ENCODE measurements at regions of chr6 and their contacts with region 1.

Region 1: GRCh38 chr6:26596579-26597388 is at the start of gene ABT1:
- DNase-seq: peak; percentile 96 to 98
- ATAC-seq: peak; percentile 98 to 99
- H3K4me3 ChIP-seq: peak within 1 kb of the TSS; percentile 82 to 97 (median 90)
- H3K27ac ChIP-seq: peak within 1 kb of the TSS; percentile 86 to 93 (median 90)
- H3K4me1 ChIP-seq: peaks cover 11 to 19% of the 10 kb centered on the region in 2 donors
- H3K27me3 ChIP-seq: peaks cover 21 to 27% (median 23%) of the 10 kb centered on the region in 3 donors
- CTCF ChIP-seq: peak in 1 of 5 experiments; percentile 31
- POLR2A ChIP-seq: peak; percentile 58 to 66
- total RNA-seq, gene ABT1: 7.1 to 13.2 (median 9.5) TPM

Region 2: DNA sequence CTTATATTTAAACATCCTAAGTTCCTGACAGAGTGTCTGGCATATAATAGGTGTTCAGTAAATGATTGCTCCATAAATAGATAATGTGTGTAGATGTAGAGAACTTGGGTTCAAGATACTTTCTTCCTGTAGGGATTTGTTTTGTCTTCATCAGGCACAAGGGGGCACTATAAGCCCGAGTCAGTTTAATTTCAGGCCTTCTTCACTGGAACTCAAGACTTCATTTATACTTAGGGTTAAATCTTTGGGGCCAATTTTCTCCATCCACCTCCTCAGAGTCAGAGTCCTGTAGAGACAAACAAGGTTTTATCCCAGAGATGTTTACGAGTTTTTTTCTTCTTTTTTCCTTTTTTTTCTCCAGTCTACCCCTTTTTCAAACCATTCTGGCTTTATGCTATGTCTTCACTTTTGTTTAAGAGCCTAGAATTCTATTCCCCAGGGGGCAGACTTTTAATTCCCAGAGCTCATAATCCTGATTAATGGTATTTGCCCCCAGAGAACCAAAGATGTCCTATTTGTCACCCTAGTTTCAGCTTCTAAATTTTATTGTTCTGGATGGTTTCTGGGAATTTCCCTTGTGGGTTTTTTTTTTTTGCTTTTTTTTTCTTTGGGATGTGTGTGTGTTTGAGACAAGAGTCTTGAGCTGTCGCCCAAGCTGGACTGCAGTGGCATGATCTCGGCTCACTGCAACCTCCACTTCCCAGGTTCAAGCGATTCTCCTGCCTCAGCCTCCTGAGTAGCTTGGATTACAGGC is 421.2 kb before region 1 on chr6:
- in situ Hi-C with region 1: loop called in 2 of 4 experiments (anchors 10 kb)
- intact Hi-C with region 1: loop called (anchors 10 kb)
- DNase-seq: no peak
- ATAC-seq: no peak
- H3K4me3 ChIP-seq: no peak overlapping the region
- H3K27ac ChIP-seq: no peak overlapping the region
- H3K4me1 ChIP-seq: peaks cover 4 to 6% of the 10 kb centered on the region in 2 donors
- H3K27me3 ChIP-seq: no peaks in the 10 kb centered on the region
- CTCF ChIP-seq: peak in 3 of 5 experiments; percentile 17 to 58 (median 51)
- POLR2A ChIP-seq: no peak

Region 3: GRCh38 chr6:26342106-26343004 is 254.4 kb before region 1 on chr6:
- in situ Hi-C with region 1: loop called in 3 of 4 experiments (anchors 5 to 10 kb)
- intact Hi-C with region 1: loop called (anchors 1 kb)
- DNase-seq: no peak
- ATAC-seq: no peak
- H3K4me3 ChIP-seq: no peak overlapping the region
- H3K27ac ChIP-seq: no peak overlapping the region
- H3K4me1 ChIP-seq: no peaks in the 10 kb centered on the region
- H3K27me3 ChIP-seq: peaks cover 4 to 16% (median 8%) of the 10 kb centered on the region in 3 donors
- CTCF ChIP-seq: no peak
- POLR2A ChIP-seq: no peak

Region 4: DNA sequence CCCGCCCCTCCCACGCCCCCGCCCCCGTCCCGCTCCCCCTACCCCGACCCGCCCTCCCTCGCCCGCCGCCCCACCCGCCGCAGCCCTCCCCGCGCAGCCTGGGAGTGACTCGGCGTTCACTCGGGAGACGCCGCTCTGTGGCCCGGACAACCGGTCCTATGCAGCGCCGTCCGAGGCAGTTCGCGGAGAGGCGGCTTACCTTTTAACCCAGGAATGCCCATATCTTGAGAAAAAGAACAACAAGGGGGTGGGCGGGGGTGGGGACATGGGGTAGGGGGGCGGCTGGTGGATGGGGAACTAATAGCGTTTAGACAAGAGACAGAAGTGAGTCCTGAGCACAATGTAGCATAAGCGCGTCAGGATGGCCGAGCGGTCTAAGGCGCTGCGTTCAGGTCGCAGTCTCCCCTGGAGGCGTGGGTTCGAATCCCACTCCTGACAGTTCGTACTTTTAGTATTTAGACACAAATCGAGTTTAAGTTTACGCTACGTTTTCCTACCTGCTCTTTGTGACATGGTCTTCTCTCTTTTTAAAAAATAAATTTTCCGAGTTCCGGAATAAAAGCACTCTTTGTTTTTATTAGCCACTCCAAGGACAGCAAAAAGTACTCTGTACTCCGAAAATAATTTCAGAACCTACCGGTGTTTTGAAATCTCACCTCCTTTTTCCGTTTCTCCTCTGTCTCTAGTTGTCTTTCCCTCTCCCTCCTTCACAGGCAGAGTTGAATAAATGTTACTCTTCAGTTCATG is 75.8 kb before region 1 on chr6:
- in situ Hi-C with region 1: no loop called
- intact Hi-C with region 1: loop called (anchors 1 kb)
- DNase-seq: peak; percentile 75 to 84
- ATAC-seq: peak; percentile 83 to 86
- H3K4me3 ChIP-seq: peak overlapping the region; percentile 66 to 84 (median 76)
- H3K27ac ChIP-seq: peak overlapping the region; percentile 90 to 98 (median 98)
- H3K4me1 ChIP-seq: peaks cover 16 to 29% of the 10 kb centered on the region in 2 donors
- H3K27me3 ChIP-seq: no peaks in the 10 kb centered on the region
- CTCF ChIP-seq: no peak
- POLR2A ChIP-seq: peak in 1 of 2 donors; percentile 3

Region 5: GRCh38 chr6:26553635-26554446 is 42.9 kb before region 1 on chr6:
- in situ Hi-C with region 1: no loop called
- intact Hi-C with region 1: loop called (anchors 5 kb)
- DNase-seq: peak; percentile 44 to 72
- ATAC-seq: peak; percentile 96 to 97
- H3K4me3 ChIP-seq: peak overlapping the region; percentile 52 to 63 (median 60)
- H3K27ac ChIP-seq: peak overlapping the region; percentile 75 to 85 (median 79)
- H3K4me1 ChIP-seq: peaks cover 10 to 13% of the 10 kb centered on the region in 2 donors
- H3K27me3 ChIP-seq: no peaks in the 10 kb centered on the region
- CTCF ChIP-seq: no peak
- POLR2A ChIP-seq: no peak

Region 6: DNA sequence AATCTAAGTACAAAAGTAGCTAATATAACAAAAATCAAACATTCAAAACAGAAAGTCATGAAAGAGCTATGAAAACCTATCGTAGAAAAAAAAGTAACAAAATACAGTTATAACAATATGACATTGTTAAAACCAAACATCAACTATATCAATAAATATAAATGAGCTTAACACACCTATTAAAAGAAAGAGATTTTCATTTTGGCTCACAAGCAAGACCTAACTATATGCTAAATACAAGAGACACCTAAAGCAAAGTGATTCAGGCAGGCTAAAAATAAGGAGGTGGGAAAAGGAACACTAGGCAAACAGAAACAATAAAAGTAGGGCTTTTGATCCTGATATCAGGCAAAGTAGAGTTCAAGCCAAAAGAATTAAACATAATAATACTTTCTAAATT is 49.3 kb after region 1 on chr6:
- in situ Hi-C with region 1: no loop called
- intact Hi-C with region 1: no loop called
- DNase-seq: no peak
- ATAC-seq: no peak
- H3K4me3 ChIP-seq: no peak overlapping the region
- H3K27ac ChIP-seq: no peak overlapping the region
- H3K4me1 ChIP-seq: no peaks in the 10 kb centered on the region
- H3K27me3 ChIP-seq: no peaks in the 10 kb centered on the region
- CTCF ChIP-seq: no peak
- POLR2A ChIP-seq: no peak

Region 7: GRCh38 chr6:26659042-26659999 is 62.5 kb after region 1 on chr6 and contains the start of gene ZNF322:
- in situ Hi-C with region 1: no loop called
- intact Hi-C with region 1: loop called (anchors 1 kb)
- DNase-seq: peak; percentile 90 to 92
- ATAC-seq: peak; percentile 98 to 99
- H3K4me3 ChIP-seq: peak within 1 kb of the TSS; percentile 71 to 92 (median 84)
- H3K27ac ChIP-seq: peak within 1 kb of the TSS; percentile 83 to 93 (median 86)
- H3K4me1 ChIP-seq: peaks cover 14 to 19% of the 10 kb centered on the region in 2 donors
- H3K27me3 ChIP-seq: no peaks in the 10 kb centered on the region
- CTCF ChIP-seq: peak in 2 of 5 experiments; percentile 25 to 35
- POLR2A ChIP-seq: peak; percentile 69 to 70
- total RNA-seq, gene ZNF322: 5.1 to 10.8 (median 8.7) TPM